ENCODE measurements at regions of chr11 and their contacts with region 1.

Region 1: GRCh38 chr11:90204832-90205646 is 17.8 kb downstream of the CHORDC1 start:
- DNase-seq: no peak
- ATAC-seq: peak; percentile 77
- H3K4me3 ChIP-seq: no peak overlapping the region
- H3K27ac ChIP-seq: no peak overlapping the region
- H3K4me1 ChIP-seq: no peaks in the 10 kb centered on the region
- H3K27me3 ChIP-seq: no peaks in the 10 kb centered on the region
- CTCF ChIP-seq: peak; percentile 82 to 86 (median 86)
- EP300 ChIP-seq: no peak
- POLR2A ChIP-seq: no peak
- RAD21 ChIP-seq: peak; percentile 76

Region 2: GRCh38 chr11:90187839-90188238 is 17.2 kb before region 1 on chr11:
- CTCF ChIA-PET with region 1: interaction called, 15 read pairs
- POLR2A ChIA-PET with region 1: no interaction called
- RAD21 ChIA-PET with region 1: no interaction called
- SMC1A ChIA-PET with region 1: no interaction called
- in situ Hi-C with region 1: no loop called
- intact Hi-C with region 1: no loop called
- DNase-seq: no peak
- ATAC-seq: peak; percentile 60
- H3K4me3 ChIP-seq: no peak overlapping the region
- H3K27ac ChIP-seq: no peak overlapping the region
- H3K4me1 ChIP-seq: no peaks in the 10 kb centered on the region
- H3K27me3 ChIP-seq: no peaks in the 10 kb centered on the region
- CTCF ChIP-seq: no peak
- EP300 ChIP-seq: no peak
- POLR2A ChIP-seq: no peak
- RAD21 ChIP-seq: no peak

Region 3: DNA sequence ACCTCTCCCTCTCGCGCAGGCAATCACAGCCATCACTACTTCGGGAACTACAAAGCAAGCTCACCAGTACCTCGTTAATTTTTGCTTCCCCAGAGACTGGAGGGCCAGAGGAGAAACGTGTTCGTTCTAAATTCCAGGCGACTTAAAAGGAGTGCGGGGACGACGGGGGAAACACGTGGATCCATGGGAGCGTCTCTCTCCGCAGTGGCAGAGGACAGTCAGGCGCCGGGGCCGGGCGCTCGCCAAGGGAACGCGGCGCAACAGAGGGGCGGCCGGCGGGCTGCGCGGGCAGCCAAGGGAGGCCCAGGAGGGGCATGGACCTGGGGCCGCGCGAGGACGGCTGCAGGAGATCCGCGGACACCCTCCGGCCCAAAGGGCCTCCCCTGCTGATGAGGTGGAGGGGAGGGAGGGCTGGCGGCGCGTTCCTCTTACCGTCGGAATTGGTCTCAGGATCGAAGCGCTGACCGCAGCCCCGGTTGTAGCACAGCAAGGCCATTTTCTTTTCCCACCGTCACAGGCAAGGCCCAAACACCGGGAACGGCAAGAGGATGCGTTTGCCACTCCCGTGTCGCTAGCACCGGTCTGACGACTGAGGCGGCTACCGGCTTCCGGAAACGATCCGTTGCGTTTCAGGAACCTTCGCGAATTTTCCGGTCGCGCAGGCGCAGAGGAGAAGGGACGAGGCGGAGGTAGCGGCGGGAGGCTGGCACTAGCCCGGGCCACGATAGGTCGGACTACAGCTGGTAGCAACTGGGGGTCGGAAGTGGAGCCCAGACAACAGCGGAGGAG is 17.6 kb after region 1 on chr11 and contains the start of gene CHORDC1:
- CTCF ChIA-PET with region 1: interaction called, 67 read pairs
- POLR2A ChIA-PET with region 1: interaction called, 3 read pairs
- RAD21 ChIA-PET with region 1: interaction called, 9 read pairs
- SMC1A ChIA-PET with region 1: interaction called, 5 read pairs
- in situ Hi-C with region 1: no loop called
- intact Hi-C with region 1: loop called (anchors 2 kb)
- DNase-seq: peak; percentile 71
- ATAC-seq: peak; percentile 93
- H3K4me3 ChIP-seq: peak within 1 kb of the TSS; percentile 87
- H3K27ac ChIP-seq: peak within 1 kb of the TSS; percentile 68
- H3K4me1 ChIP-seq: 0 out of 2 replicates have a peak, but pooled peaks cover 4% of the 10 kb centered on the region
- H3K27me3 ChIP-seq: no peaks in the 10 kb centered on the region
- CTCF ChIP-seq: no peak
- EP300 ChIP-seq: peak in 1 of 2 experiments; percentile 83; a peak in 1 of 4 replicates
- POLR2A ChIP-seq: peak; percentile 90
- RAD21 ChIP-seq: no peak
- polyA plus RNA-seq, gene CHORDC1: 53.1 to 55.4 TPM